Naive thymus-derived CD4-positive, alpha-beta T cell (primary cell): ENCODE measurements at regions of chr2 and their contacts with region 1.

Region 1: DNA sequence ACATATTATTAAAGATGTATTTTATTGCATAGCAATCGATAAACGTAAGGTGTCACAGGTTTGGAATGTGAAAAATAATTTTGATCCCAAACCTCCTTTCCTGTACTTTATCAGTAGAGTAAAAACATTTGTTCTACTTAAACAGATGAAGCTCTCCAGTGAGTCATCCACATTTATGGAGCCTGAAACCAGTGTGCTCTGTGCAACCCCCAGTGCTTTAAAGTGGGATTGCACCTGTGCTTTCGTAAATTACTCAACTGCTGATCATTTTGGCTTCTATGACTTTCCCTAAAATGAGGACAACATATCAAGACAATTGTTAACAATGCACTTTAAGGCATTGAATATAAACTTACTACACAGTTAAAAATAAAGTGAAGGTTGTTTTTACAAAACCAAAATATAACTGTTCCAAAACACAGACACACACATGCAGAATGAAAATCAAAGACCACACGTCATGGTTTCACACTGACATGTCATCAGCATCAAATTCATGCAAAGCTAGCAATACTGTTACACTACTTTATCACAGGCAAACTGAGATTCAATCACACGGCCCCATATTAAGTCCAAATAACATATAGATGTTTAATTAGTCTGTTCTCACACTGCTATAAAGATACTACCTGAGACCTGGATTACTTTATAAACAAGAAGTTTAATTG is 9.7 kb downstream of the TMEM18 start:
- DNase-seq: no peak
- ATAC-seq: peak; percentile 66
- H3K4me3 ChIP-seq: no peak overlapping the region
- H3K4me3 Mint-ChIP-seq: no peak overlapping the region
- H3K27ac ChIP-seq: no peak overlapping the region
- H3K27ac Mint-ChIP-seq: peak overlapping the region in 1 of 9 donors; percentile 42
- H3K4me1 ChIP-seq: peaks cover 3 to 4% of the 10 kb centered on the region in 2 donors
- H3K4me1 Mint-ChIP-seq: peaks cover 10 to 33% (median 13%) of the 10 kb centered on the region in 7 donors
- H3K27me3 ChIP-seq: no peaks in the 10 kb centered on the region
- H3K27me3 Mint-ChIP-seq: no peaks in the 10 kb centered on the region

Region 2: GRCh38 chr2:246489-247144 is 420.8 kb before region 1 on chr2:
- CTCF ChIA-PET with region 1: no interaction called
- POLR2A ChIA-PET with region 1: no interaction called
- intact Hi-C with region 1: loop called in 1 of 2 experiments (anchors 1 kb)
- DNase-seq: peak in 7 of 9 donors; percentile 21 to 57 (median 49)
- ATAC-seq: peak; percentile 57
- H3K4me3 ChIP-seq: no peak overlapping the region
- H3K4me3 Mint-ChIP-seq: no peak overlapping the region
- H3K27ac ChIP-seq: no peak overlapping the region
- H3K27ac Mint-ChIP-seq: peak overlapping the region in 3 of 9 donors; percentile 7 to 34 (median 24)
- H3K4me1 ChIP-seq: no peaks in the 10 kb centered on the region
- H3K4me1 Mint-ChIP-seq: peaks cover 4 to 9% (median 7%) of the 10 kb centered on the region in 7 donors
- H3K27me3 ChIP-seq: no peaks in the 10 kb centered on the region
- H3K27me3 Mint-ChIP-seq: no peaks in the 10 kb centered on the region

Region 3: GRCh38 chr2:529425-529824 is 138.0 kb before region 1 on chr2:
- CTCF ChIA-PET with region 1: no interaction called
- POLR2A ChIA-PET with region 1: no interaction called
- intact Hi-C with region 1: loop called in 1 of 2 experiments (anchors 1 kb)
- DNase-seq: peak in 7 of 9 donors; percentile 2 to 39 (median 21)
- ATAC-seq: peak; percentile 65
- H3K4me3 ChIP-seq: no peak overlapping the region
- H3K4me3 Mint-ChIP-seq: no peak overlapping the region
- H3K27ac ChIP-seq: no peak overlapping the region
- H3K27ac Mint-ChIP-seq: no peak overlapping the region
- H3K4me1 ChIP-seq: no peaks in the 10 kb centered on the region
- H3K4me1 Mint-ChIP-seq: no peaks in the 10 kb centered on the region
- H3K27me3 ChIP-seq: no peaks in the 10 kb centered on the region
- H3K27me3 Mint-ChIP-seq: peaks cover 6 to 26% (median 8%) of the 10 kb centered on the region in 5 donors